GM10248 (cell line): ENCODE measurements at regions of chr6 and their contacts with region 1.

Region 1: GRCh38 chr6:85482905-85483700 is 33.2 kb downstream of the NT5E start:
- DNase-seq: peak; percentile 70
- CTCF ChIP-seq: peak; percentile 99

Region 2: DNA sequence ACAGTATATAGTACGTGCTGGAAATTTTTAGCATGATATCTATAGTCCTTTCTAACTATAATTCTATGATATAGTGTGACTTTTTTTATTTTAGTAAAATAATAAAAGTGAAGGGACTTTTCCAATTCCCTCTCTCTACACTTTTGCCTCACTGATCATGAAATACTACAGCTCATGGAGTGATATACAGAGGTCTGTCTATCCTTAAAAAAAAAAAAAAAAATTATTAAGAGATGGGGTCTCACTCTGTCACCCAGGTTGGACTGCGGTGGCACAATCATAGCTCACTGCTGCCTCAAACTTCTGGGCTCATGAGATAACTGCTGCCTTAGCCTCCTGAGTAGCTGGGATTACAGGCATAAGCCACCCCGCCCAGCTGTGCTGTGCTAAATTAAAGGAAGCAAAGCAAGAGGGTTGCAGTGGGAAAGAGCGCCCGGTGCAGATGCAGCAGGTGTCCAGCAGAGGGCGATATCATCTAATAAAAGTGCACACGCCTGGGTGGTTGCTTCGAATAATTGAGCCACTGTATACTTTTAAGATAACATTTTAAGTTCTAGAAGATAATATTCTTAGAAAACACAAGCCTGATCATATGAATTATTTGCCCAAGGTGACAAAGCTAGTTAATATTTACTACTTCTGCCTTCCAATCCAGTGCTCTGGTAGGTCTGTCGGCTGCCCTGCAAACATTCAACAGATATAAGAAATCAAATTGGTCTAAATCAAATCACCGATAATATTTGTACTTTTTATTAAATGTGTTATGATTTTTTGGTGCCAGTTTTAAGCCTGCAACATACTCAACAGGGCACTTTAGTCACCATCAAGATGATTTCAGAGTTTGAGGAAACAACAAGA is 128.1 kb before region 1 on chr6:
- CTCF ChIA-PET with region 1: interaction called, 186 read pairs
- POLR2A ChIA-PET with region 1: no interaction called
- DNase-seq: peak; percentile 57
- CTCF ChIP-seq: peak; percentile 98

Region 3: DNA sequence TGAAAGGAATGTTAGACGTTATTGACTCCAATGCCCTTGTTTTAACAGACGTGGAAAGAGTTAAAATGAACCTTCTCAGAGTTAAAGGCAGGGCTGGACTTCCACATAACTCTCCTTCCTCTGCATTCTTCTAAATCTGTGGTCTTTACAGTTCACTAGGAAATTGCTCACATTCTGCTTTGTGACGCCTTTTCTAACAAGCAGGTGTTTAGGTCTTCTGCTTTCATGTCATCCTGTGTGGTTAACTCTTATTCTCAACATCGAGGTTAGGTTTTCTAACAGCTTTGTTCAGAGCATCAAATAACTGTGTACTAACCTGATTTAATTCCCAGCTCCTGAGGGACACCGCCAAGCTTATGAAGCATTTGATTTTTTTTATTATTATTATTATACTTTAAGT is 114.5 kb before region 1 on chr6:
- CTCF ChIA-PET with region 1: interaction called, 82 read pairs
- POLR2A ChIA-PET with region 1: no interaction called
- DNase-seq: no peak
- CTCF ChIP-seq: no peak

Region 4: DNA sequence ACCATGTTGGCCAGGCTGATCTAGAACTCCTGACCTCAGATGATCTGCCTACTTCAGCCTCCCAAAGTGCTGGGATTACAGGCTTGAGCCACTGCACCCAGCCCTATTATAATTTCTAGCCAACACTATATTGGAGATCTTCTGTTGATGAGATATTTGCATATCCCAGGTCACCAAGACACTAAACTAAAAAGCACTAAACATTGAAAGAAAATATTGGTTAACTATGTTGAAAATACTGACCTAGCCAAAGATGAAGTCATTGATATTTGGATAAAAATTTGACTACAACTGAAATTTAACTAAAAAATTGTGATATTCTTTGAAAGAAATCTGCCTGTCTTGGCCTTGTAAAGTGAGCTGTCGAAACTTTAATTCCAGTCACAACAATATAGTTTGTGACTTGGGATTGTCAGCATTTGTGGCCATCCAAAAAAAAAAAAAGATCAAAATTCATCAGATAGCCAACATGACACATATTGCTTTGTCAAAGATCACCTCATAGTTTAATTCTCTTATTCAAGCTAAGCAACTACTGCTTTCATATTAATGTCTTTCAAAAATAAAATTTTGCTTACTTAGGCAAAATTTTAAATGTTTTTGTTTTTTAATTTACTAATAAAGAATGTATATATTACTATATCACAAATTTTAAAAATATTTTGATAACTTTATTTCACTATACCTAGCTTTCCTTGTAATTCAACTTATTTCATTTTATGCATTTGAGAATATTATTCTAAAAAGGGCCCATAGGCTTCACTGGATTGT is 39.6 kb before region 1 on chr6:
- CTCF ChIA-PET with region 1: interaction called, 70 read pairs
- POLR2A ChIA-PET with region 1: no interaction called
- DNase-seq: no peak
- CTCF ChIP-seq: no peak

Region 5: GRCh38 chr6:85460921-85461797 is 21.9 kb before region 1 on chr6:
- CTCF ChIA-PET with region 1: interaction called, 74 read pairs
- POLR2A ChIA-PET with region 1: no interaction called
- DNase-seq: peak; percentile 51
- CTCF ChIP-seq: no peak

Region 6: GRCh38 chr6:85498596-85499258 is 15.6 kb after region 1 on chr6:
- CTCF ChIA-PET with region 1: interaction called, 134 read pairs
- POLR2A ChIA-PET with region 1: no interaction called
- DNase-seq: no peak
- CTCF ChIP-seq: no peak